PC-3 (cell line): ENCODE measurements at regions of chr20 and their contacts with region 1.

Region 1: GRCh38 chr20:40962730-40963504 is 65.7 kb upstream of the TOP1 start:
- DNase-seq: peak; percentile 83
- ATAC-seq: peak; percentile 85
- H3K4me3 ChIP-seq: no peak overlapping the region
- H3K27ac ChIP-seq: no peak overlapping the region
- H3K4me1 ChIP-seq: peaks cover 17% of the 10 kb centered on the region
- H3K27me3 ChIP-seq: no peaks in the 10 kb centered on the region
- CTCF ChIP-seq: peak; percentile 94

Region 2: DNA sequence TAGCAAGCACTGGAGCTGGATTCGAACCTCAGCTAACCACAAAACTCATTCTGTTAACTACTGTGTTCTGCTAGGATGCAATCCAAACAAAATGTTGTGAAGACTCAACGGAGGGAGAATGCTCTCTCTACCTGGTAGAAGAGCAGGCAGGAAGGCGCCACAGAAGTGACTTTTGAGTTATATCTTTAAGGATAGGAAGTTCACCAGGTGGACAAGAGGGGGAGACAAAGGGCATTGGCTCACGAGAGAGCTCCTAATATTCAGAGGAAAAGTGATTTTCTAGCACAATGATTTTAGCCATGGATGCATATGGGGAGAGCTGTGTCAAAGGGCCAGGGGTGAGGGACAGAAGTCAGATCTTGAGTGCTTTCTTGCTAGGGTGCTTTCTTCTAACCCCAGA is 165.5 kb before region 1 on chr20:
- CTCF ChIA-PET with region 1: interaction called, 7 read pairs
- POLR2A ChIA-PET with region 1: no interaction called
- intact Hi-C with region 1: loop called (anchors 2 kb)
- DNase-seq: peak; percentile 37
- ATAC-seq: peak; percentile 59; the same call in 1 of the 2 replicates
- H3K4me3 ChIP-seq: no peak overlapping the region
- H3K27ac ChIP-seq: no peak overlapping the region
- H3K4me1 ChIP-seq: no peaks in the 10 kb centered on the region
- H3K27me3 ChIP-seq: peaks cover 43% of the 10 kb centered on the region; the same call in 1 of the 2 replicates
- CTCF ChIP-seq: peak; percentile 68

Region 3: GRCh38 chr20:41028348-41029148 is 65.6 kb after region 1 on chr20 and contains the start of gene TOP1:
- CTCF ChIA-PET with region 1: no interaction called
- POLR2A ChIA-PET with region 1: no interaction called
- intact Hi-C with region 1: loop called (anchors 2 kb)
- DNase-seq: peak; percentile 99
- ATAC-seq: peak; percentile 95
- H3K4me3 ChIP-seq: peak within 1 kb of the TSS; percentile 75
- H3K27ac ChIP-seq: peak within 1 kb of the TSS; percentile 65
- H3K4me1 ChIP-seq: peaks cover 35% of the 10 kb centered on the region
- H3K27me3 ChIP-seq: no peaks in the 10 kb centered on the region
- CTCF ChIP-seq: no peak
- total RNA-seq, gene TOP1: 29.1 and 56.8 TPM in 2 replicates

Region 4: GRCh38 chr20:41078329-41078728 is 115.4 kb after region 1 on chr20:
- CTCF ChIA-PET with region 1: no interaction called
- POLR2A ChIA-PET with region 1: no interaction called
- intact Hi-C with region 1: loop called (anchors 1 kb)
- DNase-seq: peak; percentile 71
- ATAC-seq: peak; percentile 74
- H3K4me3 ChIP-seq: no peak overlapping the region
- H3K27ac ChIP-seq: no peak overlapping the region
- H3K4me1 ChIP-seq: peaks cover 13% of the 10 kb centered on the region; the same call in 1 of the 2 replicates
- H3K27me3 ChIP-seq: no peaks in the 10 kb centered on the region
- CTCF ChIP-seq: peak; percentile 73

Region 5: DNA sequence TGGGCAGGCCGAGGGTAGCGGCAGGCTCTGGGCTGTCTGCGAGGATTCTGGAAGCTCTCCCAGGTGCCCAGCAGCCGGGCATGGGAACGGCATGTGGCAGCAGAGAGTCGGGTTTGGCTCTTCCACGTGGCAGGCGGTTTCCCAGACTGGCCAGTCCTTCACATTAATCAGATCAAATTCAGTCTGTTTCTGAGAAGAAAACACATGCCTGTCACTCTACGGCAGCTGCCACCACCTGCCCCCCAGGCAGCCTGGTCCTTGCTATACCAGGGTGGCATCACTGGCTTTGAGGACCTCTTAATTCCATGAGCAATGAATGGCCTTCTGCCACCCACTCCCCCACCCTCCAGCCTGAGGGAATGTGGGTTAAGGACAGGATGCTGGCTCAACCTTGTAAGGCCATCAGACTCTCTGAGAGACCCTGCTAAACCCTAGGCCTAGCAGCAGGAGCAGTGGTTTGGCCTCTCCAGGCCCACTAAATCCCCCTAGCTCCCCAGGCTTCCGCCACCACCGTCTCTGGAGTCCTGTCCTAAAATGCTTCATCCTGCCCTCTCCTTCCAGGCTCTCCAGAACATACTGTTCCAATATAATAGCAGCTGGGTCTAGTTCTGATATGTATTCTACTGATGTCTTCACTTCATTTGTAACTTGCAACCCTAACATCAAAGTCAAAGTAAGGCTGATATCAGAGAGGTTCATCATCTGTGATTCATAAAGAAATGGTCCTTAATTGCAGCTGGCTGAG is 222.3 kb after region 1 on chr20:
- CTCF ChIA-PET with region 1: no interaction called
- POLR2A ChIA-PET with region 1: no interaction called
- intact Hi-C with region 1: no loop called
- DNase-seq: no peak
- ATAC-seq: no peak
- H3K4me3 ChIP-seq: no peak overlapping the region
- H3K27ac ChIP-seq: no peak overlapping the region
- H3K4me1 ChIP-seq: peaks cover 15% of the 10 kb centered on the region
- H3K27me3 ChIP-seq: no peaks in the 10 kb centered on the region
- CTCF ChIP-seq: no peak

Region 6: GRCh38 chr20:41232973-41233926 is 270.3 kb after region 1 on chr20:
- CTCF ChIA-PET with region 1: no interaction called
- POLR2A ChIA-PET with region 1: no interaction called
- intact Hi-C with region 1: loop called (anchors 1 kb)
- DNase-seq: peak; percentile 79
- ATAC-seq: peak; percentile 72
- H3K4me3 ChIP-seq: no peak overlapping the region; the same call in 1 of the 2 replicates
- H3K27ac ChIP-seq: peak overlapping the region; percentile 10; the same call in 1 of the 2 replicates
- H3K4me1 ChIP-seq: peaks cover 32% of the 10 kb centered on the region
- H3K27me3 ChIP-seq: no peaks in the 10 kb centered on the region
- CTCF ChIP-seq: no peak